ENCODE measurements at regions of chr3 and their contacts with region 1.

Region 1: DNA sequence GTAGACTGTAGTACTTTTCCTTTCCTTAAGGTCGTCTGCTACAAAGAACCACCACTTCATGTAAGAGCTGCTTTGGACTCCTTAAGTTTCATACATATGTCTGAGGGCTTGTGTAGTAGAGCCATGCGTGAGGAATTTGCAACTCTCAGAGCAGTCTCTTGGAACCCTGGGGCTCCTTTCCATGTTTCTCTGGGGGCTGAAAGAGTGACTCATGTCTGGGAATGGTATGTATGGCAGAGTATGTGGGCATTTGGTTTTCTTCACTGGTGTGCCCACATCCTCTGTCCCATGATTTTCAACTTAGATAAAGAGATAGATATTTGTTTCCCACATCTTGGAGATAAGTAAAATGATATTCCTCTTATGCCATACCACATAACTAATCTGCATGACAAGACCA is 20.6 kb upstream of the RBM5 start:
- DNase-seq: no peak
- ATAC-seq: no peak
- H3K4me3 Mint-ChIP-seq: no peak overlapping the region
- H3K27ac Mint-ChIP-seq: no peak overlapping the region
- H3K4me1 Mint-ChIP-seq: no peaks in the 10 kb centered on the region
- H3K27me3 Mint-ChIP-seq: no peaks in the 10 kb centered on the region

Region 2: DNA sequence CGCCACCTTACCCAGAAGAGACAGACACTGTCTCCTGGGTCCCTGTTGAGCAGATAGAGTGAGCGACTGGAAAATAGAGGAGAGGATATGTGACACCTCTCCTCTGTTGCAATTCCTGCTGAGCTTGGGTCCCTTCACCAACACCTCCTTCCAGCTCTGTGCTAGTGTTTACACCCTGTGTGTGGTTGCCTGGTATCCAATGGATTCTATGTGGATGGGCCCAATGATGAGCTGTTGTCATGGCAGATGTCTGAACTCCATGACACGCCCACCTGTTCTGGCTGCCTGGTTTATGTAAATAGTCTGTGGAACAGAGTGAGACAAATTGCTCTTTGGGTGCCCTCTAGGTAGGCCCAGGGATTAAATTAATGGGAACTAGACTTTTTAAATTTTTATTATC is 44.3 kb after region 1 on chr3:
- CTCF ChIA-PET with region 1: no interaction called
- POLR2A ChIA-PET with region 1: no interaction called
- intact Hi-C with region 1: loop called in 1 of 2 experiments (anchors 2 kb)
- DNase-seq: no peak
- ATAC-seq: no peak
- H3K4me3 Mint-ChIP-seq: no peak overlapping the region
- H3K27ac Mint-ChIP-seq: no peak overlapping the region
- H3K4me1 Mint-ChIP-seq: no peaks in the 10 kb centered on the region
- H3K27me3 Mint-ChIP-seq: no peaks in the 10 kb centered on the region